ENCODE measurements at regions of chr21 and their contacts with region 1.

Region 1: GRCh38 chr21:42056996-42057689 is 14.0 kb upstream of the UMODL1 start:
- DNase-seq: peak; percentile 61
- H3K4me3 ChIP-seq: peak overlapping the region in 1 of 3 experiments; percentile 10
- H3K27ac ChIP-seq: peak overlapping the region; percentile 46
- H3K4me1 ChIP-seq: peaks cover 23% of the 10 kb centered on the region
- H3K27me3 ChIP-seq: peaks cover 0 to 2% of the 10 kb centered on the region in 2 experiments
- CTCF ChIP-seq: no peak
- POLR2A ChIP-seq: no peak

Region 2: DNA sequence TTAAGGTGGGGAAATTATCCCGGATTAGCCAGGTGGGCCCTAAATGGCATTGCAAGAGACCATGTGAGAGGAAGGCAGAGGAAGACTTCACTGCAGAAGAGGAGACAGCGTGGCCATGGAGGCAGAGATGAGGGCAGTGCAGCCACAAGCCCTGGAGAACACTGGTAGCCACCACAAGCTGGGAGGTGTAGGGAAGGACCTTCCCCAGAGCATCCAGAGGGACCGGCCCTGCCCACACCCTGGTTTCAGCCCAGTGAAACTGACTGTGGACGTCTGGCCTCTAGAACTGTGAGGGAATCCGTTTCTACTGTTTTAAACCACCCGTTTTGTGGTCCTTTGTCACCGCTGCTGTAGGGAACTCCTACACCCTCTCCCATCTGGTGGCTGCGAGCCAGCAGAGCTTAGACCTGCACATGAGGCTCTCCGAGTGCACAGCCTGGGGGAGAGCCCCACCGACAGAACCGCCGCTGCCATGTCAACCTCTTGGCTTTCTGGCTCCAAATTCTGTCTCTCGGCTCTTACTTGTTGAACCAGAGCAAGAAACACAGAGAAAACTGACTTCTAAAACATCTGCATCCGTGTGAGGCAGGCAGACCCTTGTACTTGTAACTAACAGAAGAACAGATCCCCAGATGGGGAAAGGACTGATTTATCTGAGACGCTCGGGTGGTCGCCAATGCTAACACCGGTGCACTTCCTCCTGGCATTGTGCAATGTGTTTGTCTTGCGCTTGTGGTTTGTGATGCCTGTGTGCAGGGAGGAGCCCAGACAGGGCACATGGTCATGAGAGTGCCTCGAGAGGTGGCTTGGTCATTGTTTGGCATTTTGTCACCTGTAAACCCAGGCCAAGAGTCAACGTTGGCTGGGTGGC is 458.3 kb before region 1 on chr21:
- CTCF ChIA-PET with region 1: no interaction called
- POLR2A ChIA-PET with region 1: no interaction called
- dilution Hi-C with region 1: no loop called
- intact Hi-C with region 1: no loop called
- DNase-seq: no peak
- H3K4me3 ChIP-seq: no peak overlapping the region
- H3K27ac ChIP-seq: no peak overlapping the region
- H3K4me1 ChIP-seq: no peaks in the 10 kb centered on the region
- H3K27me3 ChIP-seq: no peaks in the 10 kb centered on the region
- CTCF ChIP-seq: no peak
- POLR2A ChIP-seq: no peak

Region 3: GRCh38 chr21:42019101-42019605 is 38.0 kb before region 1 on chr21:
- CTCF ChIA-PET with region 1: no interaction called
- POLR2A ChIA-PET with region 1: no interaction called
- dilution Hi-C with region 1: no loop called
- intact Hi-C with region 1: loop called (anchors 5 kb)
- DNase-seq: no peak
- H3K4me3 ChIP-seq: no peak overlapping the region
- H3K27ac ChIP-seq: no peak overlapping the region
- H3K4me1 ChIP-seq: no peaks in the 10 kb centered on the region
- H3K27me3 ChIP-seq: peaks cover 11 to 17% of the 10 kb centered on the region in 2 experiments
- CTCF ChIP-seq: no peak
- POLR2A ChIP-seq: no peak

Region 4: GRCh38 chr21:42097860-42098454 is 40.8 kb after region 1 on chr21:
- CTCF ChIA-PET with region 1: no interaction called
- POLR2A ChIA-PET with region 1: no interaction called
- dilution Hi-C with region 1: no loop called
- intact Hi-C with region 1: loop called (anchors 2 kb)
- DNase-seq: peak; percentile 97
- H3K4me3 ChIP-seq: no peak overlapping the region
- H3K27ac ChIP-seq: peak overlapping the region; percentile 85
- H3K4me1 ChIP-seq: peaks cover 13% of the 10 kb centered on the region
- H3K27me3 ChIP-seq: peaks cover under 1 to 7% of the 10 kb centered on the region in 2 experiments
- CTCF ChIP-seq: no peak
- POLR2A ChIP-seq: no peak

Region 5: DNA sequence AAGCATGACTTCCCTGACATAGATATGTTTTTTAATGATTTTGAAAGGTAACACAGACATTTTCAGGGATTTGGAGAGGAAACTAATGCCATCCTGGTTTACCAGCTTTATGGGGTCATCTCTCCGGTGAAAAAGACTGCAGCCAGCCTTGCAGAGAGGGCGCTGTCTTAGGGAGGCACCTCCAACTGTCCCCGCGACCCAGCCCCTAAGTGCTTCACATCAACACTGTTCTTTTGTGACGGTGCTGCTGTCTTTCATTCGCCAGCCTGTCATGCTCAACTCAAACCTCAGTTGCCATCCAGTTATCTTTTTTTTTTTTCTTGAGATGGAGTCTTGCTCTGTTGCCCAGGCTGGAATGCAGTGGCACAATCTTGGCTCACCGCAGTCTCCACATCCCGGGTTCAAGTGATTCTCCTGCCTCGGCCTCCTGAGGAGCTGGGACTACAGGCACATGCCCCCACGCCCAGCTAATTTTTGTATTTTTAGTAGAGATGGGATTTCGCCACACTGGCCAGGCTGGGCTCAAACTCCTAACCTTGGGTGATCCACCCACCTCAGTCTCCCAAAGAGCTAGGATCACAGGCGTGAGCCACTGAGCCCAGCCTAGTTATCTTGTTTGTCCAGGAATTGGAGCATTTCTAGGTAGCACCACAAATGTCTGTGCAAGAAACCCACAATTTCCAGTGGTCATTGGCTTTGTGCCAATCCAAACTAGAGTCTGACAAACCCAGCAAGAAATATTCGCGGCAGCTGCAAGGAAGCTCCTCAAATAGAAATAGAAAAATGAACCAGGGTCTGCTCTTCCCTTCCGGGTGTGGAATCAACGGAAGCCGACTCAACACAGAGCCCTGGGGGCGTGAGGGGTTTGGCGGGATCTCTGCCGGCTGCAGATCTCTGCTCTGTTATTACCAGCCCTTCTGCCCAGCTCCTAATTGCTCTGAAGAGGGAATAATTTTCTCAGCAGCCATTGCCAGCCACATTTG is 620.5 kb after region 1 on chr21:
- CTCF ChIA-PET with region 1: no interaction called
- POLR2A ChIA-PET with region 1: no interaction called
- dilution Hi-C with region 1: no loop called
- intact Hi-C with region 1: no loop called
- DNase-seq: peak; percentile 65
- H3K4me3 ChIP-seq: no peak overlapping the region
- H3K27ac ChIP-seq: no peak overlapping the region
- H3K4me1 ChIP-seq: peaks cover 10% of the 10 kb centered on the region
- H3K27me3 ChIP-seq: peaks cover 0 to 9% of the 10 kb centered on the region in 2 experiments
- CTCF ChIP-seq: no peak
- POLR2A ChIP-seq: no peak

Measured in endothelial cell of umbilical vein (primary cell).